Pancreas (tissue), 10 donors: ENCODE measurements at regions of chr3 and their contacts with region 1.

Region 1: GRCh38 chr3:152071924-152072323 is 196.8 kb upstream of the MBNL1 start:
- DNase-seq: no peak
- ATAC-seq: peak in 3 of 4 donors; percentile 63 to 72 (median 69)
- H3K4me3 ChIP-seq: no peak overlapping the region
- H3K27ac ChIP-seq: no peak overlapping the region
- H3K4me1 ChIP-seq: no peaks in the 10 kb centered on the region
- H3K27me3 ChIP-seq: no peaks in the 10 kb centered on the region
- CTCF ChIP-seq: no peak

Region 2: GRCh38 chr3:152444029-152444641 is 372.2 kb after region 1 on chr3:
- intact Hi-C with region 1: loop called in 1 of 3 experiments (anchors 10 kb)
- DNase-seq: no peak
- ATAC-seq: peak; percentile 77 to 92 (median 90)
- H3K4me3 ChIP-seq: no peak overlapping the region
- H3K27ac ChIP-seq: no peak overlapping the region
- H3K4me1 ChIP-seq: peaks cover 0 to 6% (median 0%) of the 10 kb centered on the region in 3 donors
- H3K27me3 ChIP-seq: no peaks in the 10 kb centered on the region
- CTCF ChIP-seq: peak in 3 of 4 donors; percentile 31 to 59 (median 39)